Panc1 (cell line): ENCODE measurements at regions of chr12 and their contacts with region 1.

Region 1: GRCh38 chr12:43812906-43813305 is 6.8 kb upstream of the TWF1 start:
- DNase-seq: no peak
- ATAC-seq: no peak
- H3K4me3 ChIP-seq: no peak overlapping the region
- H3K27ac ChIP-seq: no peak overlapping the region
- H3K4me1 ChIP-seq: no peaks in the 10 kb centered on the region
- H3K27me3 ChIP-seq: no peaks in the 10 kb centered on the region; the same call in 1 of the 2 replicates
- CTCF ChIP-seq: no peak

Region 2: DNA sequence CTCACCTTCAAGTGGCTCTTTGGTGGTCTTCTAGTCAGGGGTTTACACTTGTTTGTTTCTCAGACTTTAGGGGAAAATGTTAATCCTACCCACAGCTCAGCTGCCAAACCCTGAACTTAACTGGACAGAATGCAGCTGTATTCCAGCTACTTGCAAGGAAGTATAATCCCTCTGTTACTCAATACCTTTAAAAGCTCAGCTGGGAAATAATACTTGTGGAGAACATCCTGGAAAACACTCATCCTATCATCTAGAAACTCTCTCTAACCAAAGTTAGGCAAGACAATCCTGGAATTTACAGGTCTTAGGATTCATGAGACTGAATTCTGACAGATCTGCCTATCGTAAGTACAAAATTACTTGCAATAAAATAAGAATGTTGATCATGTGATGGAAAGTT is 665.0 kb before region 1 on chr12:
- CTCF ChIA-PET with region 1: no interaction called
- POLR2A ChIA-PET with region 1: interaction called, 20 read pairs
- in situ Hi-C with region 1: no loop called
- intact Hi-C with region 1: no loop called
- DNase-seq: no peak
- ATAC-seq: no peak
- H3K4me3 ChIP-seq: no peak overlapping the region
- H3K27ac ChIP-seq: no peak overlapping the region
- H3K4me1 ChIP-seq: no peaks in the 10 kb centered on the region
- H3K27me3 ChIP-seq: no peaks in the 10 kb centered on the region
- CTCF ChIP-seq: no peak